Activated T-helper 1 cell treated with anti-CD3 and anti-CD28 coated beads, Interleukin-12 subunit alpha, Interleukin-12 subunit beta, Interleukin-2, Interleukin-4 antibody, amounts not matched to agents 30 ng/mL and 10 ng/mL and 1 ng/mL, durations not matched to agents 14 hours and 24 hours and 36 hours (primary cell): ENCODE measurements at regions of chr5 and their contacts with region 1.

Region 1: GRCh38 chr5:59099270-59099994 is 516.6 kb downstream of the RAB3C start:
- DNase-seq: peak; percentile 69
- H3K4me3 Mint-ChIP-seq: peak overlapping the region; percentile 50
- H3K27ac Mint-ChIP-seq: peak overlapping the region; percentile 90
- H3K4me1 Mint-ChIP-seq: peaks cover 82% of the 10 kb centered on the region
- H3K27me3 Mint-ChIP-seq: no peaks in the 10 kb centered on the region

Region 2: DNA sequence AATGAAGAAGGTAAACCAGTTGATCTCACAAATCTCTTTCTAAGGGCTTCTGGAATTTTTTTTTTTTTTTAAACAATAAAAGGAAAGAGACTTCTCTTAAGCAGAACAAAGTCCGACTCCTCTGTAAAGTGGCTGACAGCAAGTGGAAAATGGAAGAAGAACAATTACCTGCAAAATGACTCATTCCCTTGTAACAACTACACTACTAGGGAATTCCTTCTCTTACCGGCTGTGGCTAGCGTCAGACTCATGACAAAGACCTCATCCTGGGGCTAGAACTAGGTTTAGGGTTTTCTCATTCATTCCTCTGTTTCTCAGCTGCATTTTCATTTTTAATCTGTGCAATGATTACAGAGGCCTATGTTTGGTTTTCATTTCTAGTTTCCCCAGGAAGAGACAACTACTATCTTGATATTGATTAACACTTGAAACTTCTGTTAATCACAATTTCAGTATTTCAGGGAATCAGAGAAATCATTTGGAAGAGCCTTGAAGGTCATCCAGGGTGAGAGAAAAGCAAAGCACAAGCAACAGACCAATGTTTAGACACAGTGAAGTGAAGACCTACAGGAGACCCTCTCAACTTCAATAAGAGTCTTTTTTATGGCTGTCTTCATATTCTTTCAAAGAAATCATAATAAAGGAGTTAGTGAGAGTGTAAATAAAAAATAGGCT is 78.7 kb before region 1 on chr5:
- intact Hi-C with region 1: loop called (anchors 1 kb)
- DNase-seq: no peak
- H3K4me3 Mint-ChIP-seq: peak overlapping the region; percentile 15
- H3K27ac Mint-ChIP-seq: peak overlapping the region; percentile 94
- H3K4me1 Mint-ChIP-seq: peaks cover 75% of the 10 kb centered on the region
- H3K27me3 Mint-ChIP-seq: no peaks in the 10 kb centered on the region

Region 3: DNA sequence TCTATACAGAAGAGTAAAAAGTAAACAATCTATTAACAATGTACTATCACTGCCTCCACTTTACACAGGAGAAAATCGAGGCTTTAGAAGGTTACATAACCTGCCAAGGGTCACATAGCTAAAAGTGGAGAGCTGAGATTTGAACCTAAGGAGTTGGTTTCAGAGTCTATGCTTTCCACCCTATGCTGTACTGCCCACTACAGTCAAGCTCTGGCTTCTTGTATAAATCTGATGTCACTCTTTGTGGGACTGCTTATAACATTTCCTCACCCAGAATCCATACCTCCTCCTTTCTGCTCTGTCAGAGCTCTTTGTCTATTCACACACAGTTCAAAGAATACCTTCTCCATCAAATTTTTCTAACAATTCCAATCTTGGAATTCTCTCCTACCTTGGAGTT is 13.4 kb before region 1 on chr5:
- intact Hi-C with region 1: no loop called
- DNase-seq: no peak
- H3K4me3 Mint-ChIP-seq: no peak overlapping the region
- H3K27ac Mint-ChIP-seq: no peak overlapping the region
- H3K4me1 Mint-ChIP-seq: no peaks in the 10 kb centered on the region
- H3K27me3 Mint-ChIP-seq: peaks cover 13% of the 10 kb centered on the region

Region 4: DNA sequence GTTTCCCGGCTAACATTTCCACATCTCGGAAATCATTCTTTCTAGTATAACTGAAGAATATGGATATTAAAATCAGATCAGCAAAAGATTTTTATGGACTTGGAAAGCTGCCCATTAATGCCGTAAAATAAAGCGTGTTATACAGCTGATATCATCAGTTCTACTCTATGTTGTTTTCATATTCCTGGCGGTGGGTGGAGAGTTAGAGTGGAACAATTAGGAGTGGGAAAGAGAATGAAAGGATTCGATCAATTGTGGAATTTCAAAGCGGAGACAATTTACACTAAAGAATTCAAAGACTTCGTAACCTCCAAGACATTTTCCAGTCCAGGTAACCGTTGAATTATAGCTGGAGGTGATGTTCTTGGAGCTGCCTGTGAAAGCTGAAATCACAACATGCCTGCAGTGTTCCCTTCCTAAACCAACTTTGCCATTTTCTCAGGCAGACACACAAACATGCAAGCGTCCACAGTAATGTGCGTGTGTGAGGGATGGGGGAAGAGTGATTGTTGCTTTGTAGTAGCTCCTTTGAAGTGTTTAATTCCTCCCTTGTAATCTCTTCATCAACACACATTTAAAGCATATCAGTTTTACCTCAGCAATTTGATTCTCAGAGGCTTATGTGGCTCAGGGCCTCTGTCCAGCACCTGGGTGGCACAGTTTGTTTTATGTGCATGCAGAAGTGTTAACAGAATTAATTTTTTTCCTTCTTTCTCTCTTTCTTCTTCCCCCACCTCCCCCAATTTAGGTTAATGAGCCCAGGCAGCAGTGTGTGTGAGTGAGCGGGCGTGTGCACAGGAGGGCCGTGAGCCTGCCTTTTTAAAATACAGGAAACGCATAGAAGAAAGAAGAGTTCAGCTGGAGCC is 27.5 kb after region 1 on chr5:
- intact Hi-C with region 1: loop called (anchors 1 kb)
- DNase-seq: no peak
- H3K4me3 Mint-ChIP-seq: no peak overlapping the region
- H3K27ac Mint-ChIP-seq: no peak overlapping the region
- H3K4me1 Mint-ChIP-seq: peaks cover 14% of the 10 kb centered on the region
- H3K27me3 Mint-ChIP-seq: no peaks in the 10 kb centered on the region

Region 5: DNA sequence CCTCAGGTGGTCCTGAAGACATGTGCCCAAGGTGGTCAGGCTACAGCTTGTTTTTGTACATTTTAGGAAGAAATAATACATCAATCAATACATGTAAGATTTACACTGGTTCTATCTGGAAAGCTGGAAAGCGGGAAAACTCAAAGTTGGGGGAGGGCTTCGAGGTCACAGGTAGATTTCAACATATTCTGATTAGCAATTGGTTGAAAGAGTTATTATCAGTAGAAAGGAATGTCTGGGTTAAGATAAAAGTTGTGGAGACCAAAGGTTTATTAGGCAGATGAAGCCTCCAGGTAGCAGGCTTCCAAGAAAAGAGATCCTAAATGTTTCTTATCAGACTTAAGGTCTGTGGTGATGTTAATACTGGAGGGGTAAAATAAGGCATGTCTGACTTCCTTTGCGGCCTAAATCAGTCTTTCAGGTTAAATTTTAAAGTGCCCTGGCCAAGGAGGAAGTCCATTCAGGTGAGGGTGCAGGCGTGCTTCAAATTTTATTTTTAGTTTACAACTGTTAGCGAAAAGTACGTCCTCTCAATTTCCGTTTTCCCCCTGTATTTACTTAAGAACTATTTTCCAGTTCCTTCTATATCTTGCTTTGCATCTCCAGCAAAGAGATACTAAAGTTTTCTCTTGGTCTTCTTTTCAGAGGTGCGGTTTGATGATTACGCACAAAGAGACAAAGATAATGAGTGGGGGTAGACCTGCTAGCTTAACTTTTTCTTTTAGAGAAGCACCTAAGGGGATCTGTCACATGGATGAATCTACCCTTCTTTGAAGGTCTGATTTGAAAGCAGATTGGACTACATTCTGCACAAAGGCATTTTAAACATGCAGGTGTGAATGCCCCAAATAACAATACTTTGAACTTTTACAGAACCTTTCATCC is 62.0 kb after region 1 on chr5:
- intact Hi-C with region 1: loop called (anchors 1 kb)
- DNase-seq: no peak
- H3K4me3 Mint-ChIP-seq: peak overlapping the region; percentile 27
- H3K27ac Mint-ChIP-seq: peak overlapping the region; percentile 63
- H3K4me1 Mint-ChIP-seq: peaks cover 14% of the 10 kb centered on the region
- H3K27me3 Mint-ChIP-seq: peaks cover 2% of the 10 kb centered on the region

Region 6: GRCh38 chr5:59238126-59238902 is 138.9 kb after region 1 on chr5:
- intact Hi-C with region 1: loop called (anchors 1 kb)
- DNase-seq: no peak
- H3K4me3 Mint-ChIP-seq: no peak overlapping the region
- H3K27ac Mint-ChIP-seq: no peak overlapping the region
- H3K4me1 Mint-ChIP-seq: peaks cover 18% of the 10 kb centered on the region
- H3K27me3 Mint-ChIP-seq: peaks cover 61% of the 10 kb centered on the region